HCT116 (cell line): ENCODE measurements at regions of chr19 and their contacts with region 1.

Region 1: GRCh38 chr19:13880059-13881043 is 3.4 kb downstream of the NANOS3 start:
- DNase-seq: peak; percentile 91
- ATAC-seq: peak; percentile 95
- H3K4me3 ChIP-seq: peak overlapping the region; percentile 15 to 45
- H3K27ac ChIP-seq: peak overlapping the region; percentile 79
- H3K4me1 ChIP-seq: peaks cover 21 to 40% of the 10 kb centered on the region in 2 experiments
- H3K27me3 ChIP-seq: no peaks in the 10 kb centered on the region
- CTCF ChIP-seq: peak; percentile 97 to 99 (median 97)
- POLR2A ChIP-seq: no peak
- RAD21 ChIP-seq: peak; percentile 100

Region 2: DNA sequence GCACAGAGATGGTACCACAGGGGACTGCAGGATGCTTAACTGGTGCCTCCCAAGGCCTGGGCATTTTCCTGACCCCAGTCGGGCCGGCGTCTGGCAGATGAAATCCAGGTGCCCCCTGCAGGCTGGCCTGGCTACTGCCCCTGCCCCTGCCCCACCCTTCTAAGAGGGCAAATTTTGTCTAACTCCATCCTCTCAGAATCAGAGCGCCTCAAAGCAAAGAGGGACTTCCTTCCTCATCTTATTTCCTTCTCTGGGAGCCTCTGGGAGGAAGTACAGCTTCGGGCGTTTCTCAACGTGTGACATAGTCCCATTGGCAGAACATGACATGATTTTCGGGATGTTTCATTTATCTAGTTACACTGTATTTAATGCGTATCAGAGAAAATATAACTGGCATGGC is 234.5 kb after region 1 on chr19:
- CTCF ChIA-PET with region 1: interaction called, 5 read pairs
- POLR2A ChIA-PET with region 1: no interaction called
- RAD21 ChIA-PET with region 1: no interaction called
- intact Hi-C with region 1: loop called (anchors 1 kb)
- DNase-seq: no peak
- ATAC-seq: no peak
- H3K4me3 ChIP-seq: peak overlapping the region in 1 of 2 experiments; percentile 88; a peak in 1 of 4 replicates
- H3K27ac ChIP-seq: peak overlapping the region; percentile 68
- H3K4me1 ChIP-seq: peaks cover 36 to 47% of the 10 kb centered on the region in 2 experiments
- H3K27me3 ChIP-seq: no peaks in the 10 kb centered on the region
- CTCF ChIP-seq: peak; percentile 68 to 80 (median 74); a peak in 5 of 6 replicates
- POLR2A ChIP-seq: no peak
- RAD21 ChIP-seq: peak; percentile 72

Region 3: GRCh38 chr19:14198384-14199376 is 318.3 kb after region 1 on chr19:
- CTCF ChIA-PET with region 1: no interaction called
- POLR2A ChIA-PET with region 1: no interaction called
- RAD21 ChIA-PET with region 1: no interaction called
- intact Hi-C with region 1: loop called (anchors 5 kb)
- DNase-seq: no peak
- ATAC-seq: 0 out of 2 replicates have a peak, but pooled peaks have one; percentile 23
- H3K4me3 ChIP-seq: no peak overlapping the region
- H3K27ac ChIP-seq: peak overlapping the region; percentile 3; the same call in 1 of the 2 replicates
- H3K4me1 ChIP-seq: peaks cover 5 to 9% of the 10 kb centered on the region in 2 experiments; a peak in 3 of 4 replicates
- H3K27me3 ChIP-seq: no peaks in the 10 kb centered on the region
- CTCF ChIP-seq: peak; percentile 18 to 40 (median 35); a peak in 3 of 6 replicates
- POLR2A ChIP-seq: no peak
- RAD21 ChIP-seq: peak; percentile 31; the same call in 1 of the 2 replicates